ENCODE measurements at regions of chr17 and their contacts with region 1.

Region 1: DNA sequence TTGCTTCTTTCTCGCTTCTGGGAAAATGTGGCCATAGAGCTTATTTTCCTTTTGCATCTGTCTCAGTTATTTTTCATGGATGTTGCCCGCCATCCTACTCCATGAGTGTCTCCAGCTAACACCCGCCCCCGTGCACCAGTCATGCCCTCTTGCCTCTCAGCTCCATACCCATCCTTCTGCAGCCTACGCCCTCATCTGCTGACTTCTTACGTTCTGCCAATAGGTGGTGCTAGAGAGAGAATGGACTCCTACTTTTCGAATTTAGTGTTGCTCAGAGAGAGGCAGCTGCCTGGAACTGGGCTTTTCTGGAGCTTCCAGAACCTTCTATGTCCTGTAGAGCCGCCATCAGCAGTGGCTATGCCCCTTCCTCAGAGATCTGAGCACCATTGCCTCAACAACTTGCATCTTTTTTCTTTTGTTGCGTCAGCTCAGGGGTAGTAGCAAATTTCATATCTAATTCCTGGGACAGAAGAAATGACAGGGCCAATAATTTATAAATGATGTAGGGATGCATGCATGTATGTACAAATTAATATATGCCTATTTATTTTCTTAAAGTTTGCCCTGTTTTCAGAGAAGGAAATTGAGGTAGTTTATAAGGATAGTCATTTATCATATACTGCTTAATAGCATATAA is 119.7 kb upstream of the MYOCD start:
- DNase-seq: peak; percentile 55 to 75
- ATAC-seq: peak; percentile 89 to 97
- H3K4me3 ChIP-seq: no peak overlapping the region
- H3K27ac ChIP-seq: peak overlapping the region in 1 of 2 experiments; percentile 54; a peak in 2 of 6 replicates
- H3K4me1 ChIP-seq: no peaks in the 10 kb centered on the region
- CTCF ChIP-seq: peak; percentile 77
- EP300 ChIP-seq: no peak
- POLR2A ChIP-seq: no peak
- RAD21 ChIP-seq: peak; percentile 74 to 79

Region 2: DNA sequence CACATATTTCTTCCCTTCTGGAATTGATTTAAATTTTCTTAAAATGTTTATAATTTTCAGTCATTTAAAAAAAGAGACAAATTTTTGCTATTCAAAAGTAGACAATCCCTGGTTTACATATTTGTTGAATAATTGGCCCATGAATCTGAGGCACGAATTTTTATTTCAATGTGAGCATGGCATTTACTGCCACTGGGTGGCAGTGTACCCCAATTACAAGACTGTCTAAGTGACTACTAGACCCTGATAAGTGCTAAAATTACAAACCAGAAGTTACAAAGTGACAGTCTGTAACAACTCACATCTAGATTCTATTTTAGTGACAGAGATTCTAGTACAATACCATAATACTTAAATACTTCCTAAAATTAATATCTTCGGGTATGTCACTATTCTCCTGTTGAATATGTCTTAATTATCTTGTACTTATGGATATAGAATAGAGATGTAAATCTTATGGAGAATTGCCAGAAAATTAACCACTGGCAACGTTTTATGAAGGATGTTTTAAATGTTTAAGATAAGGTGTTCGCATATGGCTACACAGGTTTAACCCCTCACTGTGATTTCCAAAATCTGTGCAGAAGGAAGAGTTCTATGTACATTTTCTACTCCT is 289.5 kb before region 1 on chr17:
- CTCF ChIA-PET with region 1: interaction called, 15 read pairs
- POLR2A ChIA-PET with region 1: no interaction called
- DNase-seq: peak; percentile 55 to 75
- ATAC-seq: peak; percentile 73 to 91; a peak in 4 of 6 replicates
- H3K4me3 ChIP-seq: no peak overlapping the region
- H3K27ac ChIP-seq: peak overlapping the region; percentile 41 to 54; a peak in 5 of 6 replicates
- H3K4me1 ChIP-seq: peaks cover 9% of the 10 kb centered on the region; the same call in 2 of the 3 replicates
- CTCF ChIP-seq: peak; percentile 98
- EP300 ChIP-seq: no peak
- POLR2A ChIP-seq: no peak
- RAD21 ChIP-seq: peak; percentile 94 to 98

Region 3: DNA sequence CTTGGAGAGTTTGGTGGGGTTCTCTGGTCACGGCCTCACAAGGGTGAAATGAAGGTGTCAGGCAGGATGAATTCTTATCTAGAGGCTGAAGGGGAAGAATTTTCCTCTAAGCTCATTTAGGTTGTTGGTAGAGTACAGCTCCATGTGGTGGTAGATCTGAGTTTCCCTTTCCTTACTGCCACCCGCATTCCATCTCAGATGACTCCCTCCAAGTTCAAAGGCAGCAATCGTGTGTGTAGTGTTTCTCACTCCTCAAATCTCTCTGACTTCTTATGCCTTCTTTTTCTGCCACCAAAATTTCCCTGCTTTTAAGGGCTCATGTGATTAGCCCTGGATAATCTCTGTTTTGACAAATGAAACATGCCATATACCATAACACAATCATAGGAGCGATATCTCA is 15.8 kb before region 1 on chr17:
- CTCF ChIA-PET with region 1: interaction called, 31 read pairs
- POLR2A ChIA-PET with region 1: no interaction called
- DNase-seq: no peak
- ATAC-seq: no peak
- H3K4me3 ChIP-seq: no peak overlapping the region
- H3K27ac ChIP-seq: peak overlapping the region in 1 of 2 experiments; percentile 30; a peak in 2 of 6 replicates
- H3K4me1 ChIP-seq: peaks cover 9% of the 10 kb centered on the region
- CTCF ChIP-seq: no peak
- EP300 ChIP-seq: no peak
- POLR2A ChIP-seq: no peak
- RAD21 ChIP-seq: no peak

Region 4: GRCh38 chr17:12568358-12569251 is 22.6 kb after region 1 on chr17:
- CTCF ChIA-PET with region 1: interaction called, 26 read pairs
- POLR2A ChIA-PET with region 1: no interaction called
- DNase-seq: no peak
- ATAC-seq: peak; percentile 24 to 33; a peak in 1 of 6 replicates
- H3K4me3 ChIP-seq: no peak overlapping the region
- H3K27ac ChIP-seq: peak overlapping the region in 1 of 2 experiments; percentile 7; a peak in 1 of 6 replicates
- H3K4me1 ChIP-seq: no peaks in the 10 kb centered on the region
- CTCF ChIP-seq: no peak
- EP300 ChIP-seq: no peak
- POLR2A ChIP-seq: no peak
- RAD21 ChIP-seq: no peak

Region 5: GRCh38 chr17:12691182-12691581 is 145.2 kb after region 1 on chr17:
- CTCF ChIA-PET with region 1: no interaction called
- POLR2A ChIA-PET with region 1: no interaction called
- DNase-seq: no peak
- ATAC-seq: no peak
- H3K4me3 ChIP-seq: no peak overlapping the region
- H3K27ac ChIP-seq: no peak overlapping the region
- H3K4me1 ChIP-seq: peaks cover 16% of the 10 kb centered on the region; the same call in 2 of the 3 replicates
- CTCF ChIP-seq: no peak
- EP300 ChIP-seq: no peak
- POLR2A ChIP-seq: no peak
- RAD21 ChIP-seq: no peak

Region 6: DNA sequence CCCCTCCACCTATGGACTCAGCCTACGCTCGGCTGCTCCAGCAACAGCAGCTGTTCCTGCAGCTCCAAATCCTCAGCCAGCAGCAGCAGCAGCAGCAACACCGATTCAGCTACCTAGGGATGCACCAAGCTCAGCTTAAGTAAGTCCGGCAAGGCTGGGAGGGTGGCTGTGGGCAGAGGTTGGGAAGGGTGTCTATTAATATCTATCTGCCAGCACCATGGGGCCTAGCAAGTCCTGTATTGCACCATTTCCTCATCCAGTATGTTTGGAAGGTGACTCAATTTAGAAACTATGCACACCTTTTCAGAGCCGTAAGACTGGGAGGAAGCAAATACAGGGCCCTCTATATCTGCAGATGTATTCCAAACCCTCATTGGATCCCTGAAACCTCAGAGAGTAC is 198.3 kb after region 1 on chr17:
- CTCF ChIA-PET with region 1: interaction called, 11 read pairs
- POLR2A ChIA-PET with region 1: no interaction called
- DNase-seq: no peak
- ATAC-seq: no peak; a peak in 1 of 6 replicates
- H3K4me3 ChIP-seq: no peak overlapping the region
- H3K27ac ChIP-seq: no peak overlapping the region
- H3K4me1 ChIP-seq: peaks cover 11% of the 10 kb centered on the region
- CTCF ChIP-seq: no peak
- EP300 ChIP-seq: no peak
- POLR2A ChIP-seq: no peak
- RAD21 ChIP-seq: no peak

Measured in A549 (cell line).